ENCODE measurements at regions of chr12 and their contacts with region 1.

Region 1: GRCh38 chr12:6921996-6922946 is 5.5 kb upstream of the ATN1 start:
- DNase-seq: no peak
- H3K4me3 ChIP-seq: no peak overlapping the region
- H3K4me3 Mint-ChIP-seq: no peak overlapping the region
- H3K27ac ChIP-seq: no peak overlapping the region
- H3K27ac Mint-ChIP-seq: peak overlapping the region in 4 of 7 donors; percentile 30 to 95 (median 49)
- H3K4me1 ChIP-seq: peaks cover 19% of the 10 kb centered on the region
- H3K4me1 Mint-ChIP-seq: peaks cover 13 to 33% (median 20%) of the 10 kb centered on the region in 4 donors
- H3K27me3 ChIP-seq: no peaks in the 10 kb centered on the region
- H3K27me3 Mint-ChIP-seq: no peaks in the 10 kb centered on the region

Region 2: DNA sequence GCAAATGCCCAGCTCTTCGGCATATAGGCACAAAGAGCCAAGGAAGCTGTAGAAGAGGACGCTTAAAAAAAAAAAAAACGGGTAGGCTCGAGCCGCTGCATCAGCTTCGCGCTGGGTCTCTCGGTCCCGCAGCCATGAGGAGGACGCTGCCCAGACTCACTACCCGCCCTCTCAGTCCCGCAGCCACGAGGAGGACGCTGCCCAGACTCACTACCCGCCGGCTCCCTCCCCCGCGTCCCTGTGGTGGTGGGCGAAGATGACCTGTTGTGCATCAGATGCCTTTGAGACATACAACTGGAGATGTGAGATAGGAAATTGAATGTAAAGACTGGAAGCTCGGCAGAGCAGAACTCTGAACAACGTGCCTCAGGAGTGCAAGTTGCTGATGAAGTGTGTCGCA is 37.7 kb before region 1 on chr12:
- CTCF ChIA-PET with region 1: no interaction called
- POLR2A ChIA-PET with region 1: no interaction called
- intact Hi-C with region 1: no loop called
- DNase-seq: no peak
- H3K4me3 ChIP-seq: no peak overlapping the region
- H3K4me3 Mint-ChIP-seq: no peak overlapping the region
- H3K27ac ChIP-seq: no peak overlapping the region
- H3K27ac Mint-ChIP-seq: no peak overlapping the region
- H3K4me1 ChIP-seq: no peaks in the 10 kb centered on the region
- H3K4me1 Mint-ChIP-seq: no peaks in the 10 kb centered on the region
- H3K27me3 ChIP-seq: no peaks in the 10 kb centered on the region
- H3K27me3 Mint-ChIP-seq: no peaks in the 10 kb centered on the region

Region 3: DNA sequence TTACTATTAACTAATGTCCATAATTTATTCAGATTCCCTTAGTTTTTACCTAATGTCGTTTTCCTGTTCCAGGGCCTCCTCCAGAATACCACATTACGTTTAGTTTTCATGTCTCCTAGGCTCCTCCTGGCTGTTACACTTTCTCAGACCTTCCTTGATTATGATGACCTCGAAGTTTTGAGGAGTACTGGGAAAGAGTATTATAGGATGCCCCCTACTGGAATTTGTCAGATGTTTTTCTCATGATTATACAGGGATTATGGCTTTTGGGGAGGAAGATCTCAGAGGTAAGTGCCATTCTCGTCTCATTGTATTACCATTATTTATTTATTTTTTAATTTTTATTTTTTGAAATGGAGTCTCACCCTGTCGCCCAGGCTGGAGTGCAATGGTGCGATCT is 120.6 kb after region 1 on chr12:
- CTCF ChIA-PET with region 1: interaction called, 7 read pairs
- POLR2A ChIA-PET with region 1: no interaction called
- intact Hi-C with region 1: loop called (anchors 1 kb)
- DNase-seq: peak in 4 of 5 donors; percentile 6 to 23 (median 20)
- H3K4me3 ChIP-seq: no peak overlapping the region
- H3K4me3 Mint-ChIP-seq: no peak overlapping the region
- H3K27ac ChIP-seq: no peak overlapping the region
- H3K27ac Mint-ChIP-seq: peak overlapping the region in 1 of 7 donors; percentile 13
- H3K4me1 ChIP-seq: peaks cover 7% of the 10 kb centered on the region
- H3K4me1 Mint-ChIP-seq: peaks cover 6 to 11% (median 11%) of the 10 kb centered on the region in 4 donors
- H3K27me3 ChIP-seq: no peaks in the 10 kb centered on the region
- H3K27me3 Mint-ChIP-seq: no peaks in the 10 kb centered on the region

Region 4: GRCh38 chr12:7188562-7189397 is 266.5 kb after region 1 on chr12:
- CTCF ChIA-PET with region 1: no interaction called
- POLR2A ChIA-PET with region 1: no interaction called
- intact Hi-C with region 1: loop called (anchors 5 kb)
- DNase-seq: peak; percentile 52 to 64 (median 57)
- H3K4me3 ChIP-seq: peak overlapping the region; percentile 82 to 99
- H3K4me3 Mint-ChIP-seq: peak overlapping the region; percentile 95 to 100 (median 98)
- H3K27ac ChIP-seq: peak overlapping the region; percentile 94
- H3K27ac Mint-ChIP-seq: peak overlapping the region; percentile 96 to 99 (median 99)
- H3K4me1 ChIP-seq: peaks cover 39% of the 10 kb centered on the region
- H3K4me1 Mint-ChIP-seq: peaks cover 23 to 55% (median 37%) of the 10 kb centered on the region in 4 donors
- H3K27me3 ChIP-seq: no peaks in the 10 kb centered on the region
- H3K27me3 Mint-ChIP-seq: no peaks in the 10 kb centered on the region